Heart right ventricle (tissue), 16 donors: ENCODE measurements at regions of chr11 and their contacts with region 1.

Region 1: GRCh38 chr11:96267496-96268032 is 75.4 kb downstream of the MAML2 start:
- DNase-seq: no peak
- ATAC-seq: peak in 6 of 8 donors; percentile 11 to 52 (median 25)
- H3K4me3 ChIP-seq: peak overlapping the region in 1 of 10 donors; percentile 14
- H3K27ac ChIP-seq: peak overlapping the region in 7 of 10 donors; percentile 18 to 75 (median 45)
- H3K4me1 ChIP-seq: peaks cover 0 to 59% (median 19%) of the 10 kb centered on the region in 9 donors
- H3K27me3 ChIP-seq: no peaks in the 10 kb centered on the region
- CTCF ChIP-seq: no peak

Region 2: GRCh38 chr11:96306933-96307775 is 39.6 kb after region 1 on chr11:
- intact Hi-C with region 1: loop called in 1 of 10 experiments (anchors 5 kb)
- DNase-seq: peak in 1 of 2 donors; percentile 96
- ATAC-seq: peak; percentile 92 to 98 (median 95)
- H3K4me3 ChIP-seq: peak overlapping the region in 9 of 10 donors; percentile 7 to 48 (median 34)
- H3K27ac ChIP-seq: peak overlapping the region; percentile 38 to 89 (median 79)
- H3K4me1 ChIP-seq: peaks cover 3 to 100% (median 78%) of the 10 kb centered on the region in 9 donors
- H3K27me3 ChIP-seq: no peaks in the 10 kb centered on the region
- CTCF ChIP-seq: no peak